Transverse colon (tissue), 4 donors: ENCODE measurements at regions of chr7 and their contacts with region 1.

Region 1: DNA sequence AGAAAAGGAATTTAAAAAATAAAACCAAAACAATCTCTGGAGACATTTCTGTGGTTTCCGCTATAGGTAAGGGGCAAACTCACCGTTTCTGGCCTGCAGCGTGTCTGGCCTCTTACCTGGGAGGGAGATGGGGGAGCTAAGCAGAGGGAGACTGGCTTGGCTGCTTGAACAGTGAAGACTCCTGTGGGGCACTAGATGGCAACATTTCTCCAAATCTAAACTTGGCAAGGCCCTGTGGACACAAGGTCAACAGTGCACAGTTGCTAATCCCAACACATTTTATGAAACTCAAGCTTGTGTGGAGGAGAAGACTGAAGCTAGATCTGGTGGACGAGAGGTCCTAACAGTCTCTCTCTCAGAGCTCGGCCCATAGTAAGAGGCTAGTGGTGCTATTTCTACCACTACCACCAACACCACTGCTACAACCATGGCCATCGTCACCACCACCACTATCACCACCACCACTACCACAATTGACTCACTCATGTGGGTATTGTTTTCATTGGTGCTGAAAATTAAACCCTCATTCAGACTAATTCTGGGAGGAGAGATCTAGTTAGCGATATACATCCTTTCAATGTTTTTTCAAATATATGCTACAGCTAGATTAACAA is 28.4 kb upstream of the CDHR3 start:
- DNase-seq: no peak
- H3K4me3 ChIP-seq: no peak overlapping the region
- H3K27ac ChIP-seq: peak overlapping the region in 1 of 4 donors; percentile 73
- H3K4me1 ChIP-seq: peaks cover 0 to 14% (median 5%) of the 10 kb centered on the region in 4 donors
- H3K27me3 ChIP-seq: no peaks in the 10 kb centered on the region
- CTCF ChIP-seq: peak; percentile 18 to 41 (median 25)
- EP300 ChIP-seq: no peak
- POLR2A ChIP-seq: no peak

Region 2: DNA sequence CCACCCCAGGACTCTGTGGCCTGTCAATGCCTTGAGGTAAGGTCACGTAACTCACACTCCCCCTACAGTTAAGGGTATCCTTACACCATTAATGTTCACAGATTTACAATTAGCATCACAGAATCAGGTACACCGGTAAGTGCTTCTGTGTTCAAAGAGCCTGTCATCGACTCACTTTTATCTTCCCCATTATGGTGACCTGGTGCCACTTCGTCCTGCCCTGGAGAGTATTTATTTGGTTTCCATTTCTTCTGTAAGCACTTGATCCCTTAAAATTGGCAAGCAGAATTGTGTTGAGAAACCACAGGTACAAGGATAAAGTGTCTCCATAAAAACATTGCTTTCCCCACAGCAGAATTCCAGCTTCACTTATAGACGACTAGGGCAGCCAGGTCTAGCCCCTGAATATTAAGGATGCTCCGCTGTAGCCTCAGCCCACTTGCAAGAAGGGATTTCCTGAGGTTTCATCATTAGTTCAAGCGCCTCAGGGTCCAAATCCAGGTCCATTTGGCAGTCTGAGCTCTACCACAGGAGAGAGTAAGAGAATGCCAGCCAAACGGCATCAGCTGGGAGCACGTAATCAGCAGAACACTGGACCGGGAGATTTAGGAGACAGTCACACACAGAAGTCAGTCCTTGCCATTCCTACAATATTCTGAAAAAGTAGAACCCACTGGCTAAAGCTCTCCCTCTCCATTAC is 68.4 kb before region 1 on chr7:
- in situ Hi-C with region 1: no loop called
- intact Hi-C with region 1: no loop called
- DNase-seq: no peak
- H3K4me3 ChIP-seq: no peak overlapping the region
- H3K27ac ChIP-seq: no peak overlapping the region
- H3K4me1 ChIP-seq: peaks cover 0 to 2% (median 0%) of the 10 kb centered on the region in 4 donors
- H3K27me3 ChIP-seq: no peaks in the 10 kb centered on the region
- CTCF ChIP-seq: no peak
- EP300 ChIP-seq: no peak
- POLR2A ChIP-seq: no peak

Region 3: GRCh38 chr7:106009403-106010226 is 74.9 kb after region 1 on chr7:
- in situ Hi-C with region 1: no loop called
- intact Hi-C with region 1: loop called (anchors 10 kb)
- DNase-seq: peak; percentile 90
- H3K4me3 ChIP-seq: no peak overlapping the region
- H3K27ac ChIP-seq: peak overlapping the region; percentile 40 to 61 (median 51)
- H3K4me1 ChIP-seq: peaks cover 4 to 19% (median 15%) of the 10 kb centered on the region in 4 donors
- H3K27me3 ChIP-seq: no peaks in the 10 kb centered on the region
- CTCF ChIP-seq: peak; percentile 95 to 98 (median 97)
- EP300 ChIP-seq: no peak
- POLR2A ChIP-seq: no peak